GM13976 (cell line): ENCODE measurements at regions of chr6 and their contacts with region 1.

Region 1: GRCh38 chr6:80605165-80605989 is 498.9 kb downstream of the BCKDHB start:
- DNase-seq: no peak
- CTCF ChIP-seq: peak; percentile 36

Region 2: DNA sequence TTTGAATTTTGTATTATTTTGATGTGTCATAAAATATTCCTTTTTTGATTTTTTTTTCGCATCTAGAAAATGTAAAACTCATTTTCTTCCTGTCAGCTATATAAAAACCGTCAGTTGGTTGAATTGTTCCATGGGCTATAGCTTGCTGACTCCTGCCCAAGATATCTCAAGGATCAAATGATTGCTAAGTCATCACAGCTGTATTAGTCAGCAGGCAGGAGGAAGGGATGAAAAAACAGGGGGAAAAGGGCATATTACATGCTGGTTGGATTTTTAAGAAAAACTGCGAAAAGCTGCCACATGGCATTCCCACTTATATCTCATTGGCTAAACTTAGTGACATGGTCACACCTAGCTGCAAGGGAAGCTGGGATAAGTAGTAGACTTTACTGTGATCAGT is 71.0 kb after region 1 on chr6:
- in situ Hi-C with region 1: no loop called
- DNase-seq: no peak
- CTCF ChIP-seq: no peak

Region 3: DNA sequence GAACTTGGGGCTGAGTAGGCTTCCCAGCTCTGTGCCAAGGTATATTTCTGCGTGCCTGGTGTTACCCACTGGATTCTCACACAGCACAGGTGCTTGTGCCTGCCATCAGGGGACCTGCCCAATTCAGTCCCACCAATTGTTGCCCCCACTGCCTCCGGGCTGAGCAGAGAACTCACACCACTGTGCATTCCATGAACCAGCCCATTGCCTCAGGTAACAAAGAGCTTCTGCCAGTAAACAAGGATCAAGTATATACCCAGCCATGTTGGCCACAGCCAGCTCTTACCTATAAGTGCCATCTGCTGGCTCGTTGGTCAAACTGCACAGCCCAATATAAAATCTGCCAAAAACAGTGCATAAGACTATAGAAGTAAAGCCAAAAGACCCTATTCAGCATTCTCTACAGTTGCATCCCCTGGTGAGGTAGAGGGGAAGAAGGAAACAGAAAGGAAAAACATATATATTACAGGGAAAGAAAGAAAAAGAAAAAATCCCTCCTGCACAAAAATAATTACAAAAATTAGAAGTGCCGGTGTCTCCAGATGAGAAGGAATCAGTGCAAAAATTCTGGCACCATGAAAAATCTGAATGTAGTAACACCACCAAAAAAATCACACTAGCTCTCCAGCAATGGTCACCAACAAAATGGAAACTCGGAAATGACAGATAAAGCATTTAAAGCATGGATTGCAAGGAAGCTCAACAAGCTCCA is 1400.8 kb after region 1 on chr6:
- in situ Hi-C with region 1: loop called (anchors 25 kb)
- DNase-seq: no peak
- CTCF ChIP-seq: peak; percentile 15